ENCODE measurements at regions of chr3 and their contacts with region 1.

Region 1: DNA sequence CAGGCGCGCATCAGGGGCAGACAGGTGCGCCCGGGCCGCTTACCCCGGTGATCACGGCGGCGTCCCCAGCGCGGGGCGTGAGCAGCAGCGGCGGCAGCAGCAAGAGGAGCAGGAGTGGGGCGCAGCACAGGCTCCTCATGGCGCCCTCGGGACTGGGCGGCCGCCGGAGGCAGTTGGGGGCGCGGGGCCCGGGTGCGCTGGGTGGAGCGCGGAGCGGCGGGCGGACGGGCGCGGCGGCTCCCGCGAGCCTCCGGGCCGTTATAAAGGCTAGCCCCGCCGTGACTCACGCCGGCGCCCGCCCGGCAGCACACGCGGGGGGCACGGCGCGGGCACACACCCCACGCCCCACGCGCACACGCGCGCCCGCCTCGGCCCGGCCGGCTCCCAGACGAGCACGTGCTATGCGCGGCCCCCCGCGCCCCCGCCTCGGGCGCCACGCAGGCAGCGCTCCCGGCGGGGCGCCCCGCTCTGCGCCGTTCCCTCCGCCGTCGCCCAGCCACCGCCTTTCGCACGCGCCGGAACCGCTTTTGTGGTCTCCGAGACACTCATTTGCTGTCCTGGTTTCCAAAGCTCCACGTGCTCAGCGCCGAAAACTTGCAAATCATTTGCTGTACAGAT is at the start of gene PROK2:
- DNase-seq: no peak
- ATAC-seq: no peak; the same call in 2 of the 3 replicates
- H3K4me3 ChIP-seq: peak within 1 kb of the TSS in 1 of 3 experiments; percentile 23; a peak in 1 of 6 replicates
- H3K27ac ChIP-seq: no peak within 1 kb of the TSS
- H3K4me1 ChIP-seq: no peaks in the 10 kb centered on the region
- H3K27me3 ChIP-seq: peaks cover 2 to 39% of the 10 kb centered on the region in 2 experiments; a peak in 3 of 5 replicates
- CTCF ChIP-seq: no peak
- EP300 ChIP-seq: no peak
- POLR2A ChIP-seq: no peak
- RAD21 ChIP-seq: no peak
- total RNA-seq, gene PROK2: not detected in 2 replicates

Region 2: GRCh38 chr3:71397046-71397445 is 388.0 kb before region 1 on chr3:
- CTCF ChIA-PET with region 1: no interaction called
- POLR2A ChIA-PET with region 1: no interaction called
- in situ Hi-C with region 1: no loop called
- intact Hi-C with region 1: loop called (anchors 10 kb)
- DNase-seq: peak; percentile 15
- ATAC-seq: peak; percentile 31; the same call in 1 of the 3 replicates
- H3K4me3 ChIP-seq: no peak overlapping the region
- H3K27ac ChIP-seq: no peak overlapping the region
- H3K4me1 ChIP-seq: peaks cover 50% of the 10 kb centered on the region
- H3K27me3 ChIP-seq: no peaks in the 10 kb centered on the region
- CTCF ChIP-seq: peak; percentile 49
- EP300 ChIP-seq: no peak
- POLR2A ChIP-seq: no peak
- RAD21 ChIP-seq: no peak

Region 3: GRCh38 chr3:71831599-71831998 is 46.6 kb after region 1 on chr3:
- CTCF ChIA-PET with region 1: no interaction called
- POLR2A ChIA-PET with region 1: no interaction called
- in situ Hi-C with region 1: no loop called
- intact Hi-C with region 1: loop called (anchors 1 kb)
- DNase-seq: no peak
- ATAC-seq: no peak
- H3K4me3 ChIP-seq: no peak overlapping the region
- H3K27ac ChIP-seq: no peak overlapping the region
- H3K4me1 ChIP-seq: no peaks in the 10 kb centered on the region
- H3K27me3 ChIP-seq: peaks cover 0 to 2% of the 10 kb centered on the region in 2 experiments; a peak in 1 of 5 replicates
- CTCF ChIP-seq: no peak
- EP300 ChIP-seq: no peak
- POLR2A ChIP-seq: no peak
- RAD21 ChIP-seq: no peak

Measured in HepG2 (cell line).